ENCODE measurements at regions of chr1 and their contacts with region 1.

Region 1: GRCh38 chr1:198007687-198008607 is 90.8 kb downstream of the LHX9 start:
- DNase-seq: no peak
- H3K4me3 ChIP-seq: no peak overlapping the region
- CTCF ChIP-seq: no peak
- POLR2A ChIP-seq: no peak

Region 2: DNA sequence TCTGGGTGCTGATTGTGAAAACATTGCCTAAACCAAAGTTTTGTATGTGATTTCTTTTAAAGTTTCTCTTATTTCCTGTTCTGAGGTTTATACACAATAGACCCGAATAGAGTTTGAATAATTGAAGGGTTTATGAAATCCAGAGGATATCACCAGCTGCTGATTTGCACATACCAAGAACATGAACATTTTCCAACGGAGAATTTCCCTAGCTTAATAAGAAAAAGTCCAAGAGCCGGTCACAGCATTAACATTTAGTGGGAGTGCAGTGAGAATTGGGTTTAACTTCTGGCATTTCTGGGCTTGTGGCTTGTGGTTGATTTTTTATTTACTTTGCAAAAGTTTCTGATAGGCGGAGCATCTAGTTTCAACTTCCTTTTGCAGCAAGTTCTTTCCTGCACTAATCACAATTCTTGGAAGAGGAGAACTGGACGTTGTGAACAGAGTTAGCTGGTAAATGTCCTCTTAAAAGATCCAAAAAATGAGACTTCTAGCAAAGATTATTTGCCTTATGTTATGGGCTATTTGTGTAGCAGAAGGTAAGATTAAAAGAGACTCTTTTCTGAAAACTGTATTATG is 1356.2 kb before region 1 on chr1 and contains the start of gene CFH:
- intact Hi-C with region 1: no loop called
- DNase-seq: no peak
- H3K4me3 ChIP-seq: no peak within 1 kb of the TSS
- CTCF ChIP-seq: no peak
- POLR2A ChIP-seq: no peak
- total RNA-seq, gene CFH: 40.8 to 115 (median 56.6) TPM

Region 3: DNA sequence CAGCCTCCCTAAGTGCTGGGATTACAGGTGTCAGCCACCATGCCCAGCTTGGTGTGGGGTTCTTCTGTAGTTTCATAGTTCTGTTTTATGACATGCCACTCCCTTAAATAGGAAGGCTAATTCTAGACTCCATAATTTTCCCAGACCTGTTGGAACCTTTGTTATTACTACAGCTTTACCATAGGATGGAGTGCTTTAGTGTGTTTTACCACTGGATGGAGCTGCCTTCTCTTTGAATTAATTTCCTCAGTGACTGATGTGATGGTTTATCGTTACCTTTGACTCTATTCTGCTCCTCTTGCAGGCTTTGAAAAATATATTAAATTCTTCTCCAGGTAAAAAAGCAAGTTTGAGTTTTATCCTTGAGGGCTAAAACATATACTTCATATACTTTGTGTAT is 64.2 kb after region 1 on chr1:
- intact Hi-C with region 1: no loop called
- DNase-seq: no peak
- H3K4me3 ChIP-seq: no peak overlapping the region
- CTCF ChIP-seq: no peak
- POLR2A ChIP-seq: no peak

Region 4: DNA sequence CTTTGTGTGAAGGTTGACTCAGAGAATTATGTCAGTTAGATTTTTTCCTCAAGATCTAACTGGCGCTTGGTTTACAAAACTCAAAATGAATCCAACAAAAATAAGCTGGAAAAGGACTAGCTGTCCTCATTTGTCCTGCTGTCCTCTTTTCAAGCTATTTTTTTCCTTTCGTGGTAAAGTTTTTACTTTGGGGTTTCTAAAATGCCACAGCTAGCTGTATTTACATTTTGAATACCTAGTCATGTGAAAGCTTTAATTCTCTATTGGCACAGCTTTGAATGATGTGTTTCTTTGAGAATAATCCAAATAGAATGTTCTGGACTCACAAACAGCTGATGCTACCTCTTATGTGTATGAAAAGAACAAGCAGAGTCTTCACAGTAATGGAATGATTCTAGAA is 1346.0 kb after region 1 on chr1:
- intact Hi-C with region 1: loop called (anchors 5 kb)
- DNase-seq: no peak
- H3K4me3 ChIP-seq: no peak overlapping the region
- CTCF ChIP-seq: no peak
- POLR2A ChIP-seq: no peak